HCT116 (cell line): ENCODE measurements at regions of chr2 and their contacts with region 1.

Region 1: DNA sequence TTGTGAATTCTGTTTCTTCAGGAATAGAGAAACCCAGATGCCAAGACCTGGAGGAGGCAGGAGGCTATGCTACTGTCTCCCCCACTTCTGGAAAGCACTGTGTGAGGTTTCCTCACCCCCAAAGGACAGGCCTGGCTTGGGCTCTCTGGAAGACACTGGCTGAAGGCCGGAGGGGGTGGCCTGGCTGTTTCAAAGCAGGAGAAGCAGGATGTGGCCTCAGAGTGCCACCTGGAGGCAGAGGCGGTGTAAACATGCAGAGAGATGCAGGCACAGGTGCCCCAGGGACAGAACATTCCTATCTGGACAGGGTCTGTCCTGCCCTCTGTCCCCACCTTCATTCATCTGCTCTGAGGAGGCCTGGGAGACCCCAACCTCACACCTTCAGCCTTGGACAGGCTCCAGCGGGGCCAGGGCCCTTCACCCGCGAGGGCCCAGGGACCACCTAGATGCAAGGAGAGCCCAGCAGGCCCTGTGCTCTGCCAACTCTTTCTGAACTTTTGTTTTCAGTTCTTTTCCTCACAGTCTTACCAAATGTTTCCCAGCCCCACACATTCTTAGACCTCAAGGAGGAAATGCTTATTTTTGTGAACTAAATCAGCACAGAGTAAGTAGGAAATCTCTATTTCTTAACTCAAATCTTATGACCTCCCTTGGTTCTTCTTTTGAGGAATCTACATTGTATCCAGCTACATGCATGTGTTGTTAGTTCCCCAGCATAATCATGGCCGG is 79.2 kb downstream of the LONRF2 start:
- DNase-seq: peak; percentile 35
- ATAC-seq: peak; percentile 94
- H3K4me3 ChIP-seq: no peak overlapping the region
- H3K27ac ChIP-seq: no peak overlapping the region
- H3K4me1 ChIP-seq: no peaks in the 10 kb centered on the region
- H3K27me3 ChIP-seq: peaks cover 4% of the 10 kb centered on the region; the same call in 1 of the 2 replicates
- CTCF ChIP-seq: peak; percentile 74 to 78 (median 77)
- POLR2A ChIP-seq: no peak
- RAD21 ChIP-seq: peak; percentile 89

Region 2: GRCh38 chr2:99725820-99726219 is 517.2 kb before region 1 on chr2:
- CTCF ChIA-PET with region 1: interaction called, 3 read pairs
- POLR2A ChIA-PET with region 1: no interaction called
- RAD21 ChIA-PET with region 1: no interaction called
- intact Hi-C with region 1: loop called (anchors 2 kb)
- DNase-seq: no peak
- ATAC-seq: no peak
- H3K4me3 ChIP-seq: no peak overlapping the region
- H3K27ac ChIP-seq: no peak overlapping the region
- H3K4me1 ChIP-seq: no peaks in the 10 kb centered on the region
- H3K27me3 ChIP-seq: peaks cover 12% of the 10 kb centered on the region; the same call in 1 of the 2 replicates
- CTCF ChIP-seq: no peak; a peak in 1 of 6 replicates
- POLR2A ChIP-seq: no peak
- RAD21 ChIP-seq: peak; percentile 33

Region 3: DNA sequence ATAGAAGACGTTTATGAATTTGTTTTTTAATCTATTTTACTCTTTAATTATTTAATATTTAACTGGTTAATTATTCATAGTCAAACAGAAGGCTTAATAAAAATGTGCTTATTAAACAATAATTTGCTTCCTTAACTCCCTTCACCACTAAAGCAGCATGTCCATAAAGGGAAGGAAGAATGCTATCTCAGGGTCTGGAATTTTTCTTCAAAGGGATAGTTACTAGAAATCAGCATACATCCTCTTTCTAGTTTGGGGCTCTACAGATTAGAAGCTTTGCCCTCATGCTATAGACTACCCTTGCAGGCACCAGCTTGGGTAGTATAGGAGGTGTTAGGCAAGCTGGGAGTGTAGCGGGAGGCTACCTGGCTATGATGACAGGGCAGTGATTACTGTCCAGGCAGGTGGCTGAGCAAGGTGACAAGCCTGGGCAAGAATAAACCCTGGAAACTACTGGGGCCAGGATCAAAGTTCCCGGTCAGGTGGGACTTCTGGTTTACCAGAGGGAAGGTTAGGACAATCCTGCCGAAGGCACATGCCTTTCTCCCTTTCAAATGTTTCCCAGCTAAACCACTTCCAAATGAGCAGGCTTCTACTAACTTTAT is 477.2 kb before region 1 on chr2:
- CTCF ChIA-PET with region 1: no interaction called
- POLR2A ChIA-PET with region 1: no interaction called
- RAD21 ChIA-PET with region 1: no interaction called
- intact Hi-C with region 1: no loop called
- DNase-seq: no peak
- ATAC-seq: no peak
- H3K4me3 ChIP-seq: no peak overlapping the region
- H3K27ac ChIP-seq: no peak overlapping the region
- H3K4me1 ChIP-seq: no peaks in the 10 kb centered on the region
- H3K27me3 ChIP-seq: peaks cover 52% of the 10 kb centered on the region
- CTCF ChIP-seq: no peak
- POLR2A ChIP-seq: no peak
- RAD21 ChIP-seq: no peak

Region 4: GRCh38 chr2:99818842-99819241 is 424.2 kb before region 1 on chr2:
- CTCF ChIA-PET with region 1: interaction called, 7 read pairs
- POLR2A ChIA-PET with region 1: no interaction called
- RAD21 ChIA-PET with region 1: no interaction called
- intact Hi-C with region 1: loop called (anchors 1 kb)
- DNase-seq: peak; percentile 12
- ATAC-seq: no peak
- H3K4me3 ChIP-seq: no peak overlapping the region
- H3K27ac ChIP-seq: no peak overlapping the region
- H3K4me1 ChIP-seq: no peaks in the 10 kb centered on the region
- H3K27me3 ChIP-seq: peaks cover 49% of the 10 kb centered on the region
- CTCF ChIP-seq: peak; percentile 19 to 37 (median 37); a peak in 3 of 6 replicates
- POLR2A ChIP-seq: no peak
- RAD21 ChIP-seq: peak; percentile 51

Region 5: GRCh38 chr2:100178051-100178788 is 64.8 kb before region 1 on chr2:
- CTCF ChIA-PET with region 1: no interaction called
- POLR2A ChIA-PET with region 1: no interaction called
- RAD21 ChIA-PET with region 1: no interaction called
- intact Hi-C with region 1: loop called (anchors 5 kb)
- DNase-seq: peak; percentile 88
- ATAC-seq: peak; percentile 97
- H3K4me3 ChIP-seq: no peak overlapping the region
- H3K27ac ChIP-seq: no peak overlapping the region
- H3K4me1 ChIP-seq: no peaks in the 10 kb centered on the region
- H3K27me3 ChIP-seq: no peaks in the 10 kb centered on the region
- CTCF ChIP-seq: peak; percentile 25 to 73 (median 69); a peak in 4 of 6 replicates
- POLR2A ChIP-seq: peak; percentile 35
- RAD21 ChIP-seq: peak; percentile 24; the same call in 1 of the 2 replicates

Region 6: DNA sequence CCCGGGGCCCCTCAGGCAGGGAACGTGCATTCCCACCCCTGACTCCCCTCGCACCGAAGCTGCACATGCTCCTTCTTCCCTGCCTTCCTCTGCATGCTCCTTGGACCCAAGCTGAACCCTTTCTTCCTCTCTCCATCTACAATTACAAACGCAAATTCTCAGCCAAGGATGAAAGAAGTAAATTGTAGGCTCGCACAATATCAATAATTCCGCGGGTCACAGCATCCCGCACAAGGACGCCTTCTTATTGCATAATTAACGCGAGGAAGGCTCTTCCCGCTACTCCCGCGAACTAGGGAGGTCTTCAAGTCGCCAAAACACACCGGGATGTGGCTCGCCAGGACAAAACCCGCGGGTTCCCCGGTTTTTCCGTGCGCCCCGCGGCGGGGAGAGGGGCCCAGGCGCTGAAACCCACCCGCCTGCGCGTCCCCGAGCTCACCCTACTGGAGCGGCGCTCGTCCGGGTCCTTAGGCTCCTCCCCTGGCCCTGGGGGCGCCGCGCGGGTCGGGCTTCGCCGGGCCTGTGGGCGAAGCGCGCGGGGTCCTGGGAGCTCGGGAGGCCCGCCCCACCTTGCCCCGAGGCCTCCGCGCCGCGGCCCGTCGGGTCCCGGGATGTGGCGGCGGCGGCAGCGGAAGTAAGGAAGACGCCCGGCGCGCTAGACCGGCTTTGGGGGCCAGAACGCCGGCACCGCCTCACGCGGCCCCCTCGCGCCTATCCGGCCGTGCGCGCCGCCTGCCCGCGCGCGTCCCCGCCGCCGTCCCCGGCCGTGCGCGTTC is 174.1 kb after region 1 on chr2 and contains the start of gene CHST10:
- CTCF ChIA-PET with region 1: no interaction called
- POLR2A ChIA-PET with region 1: no interaction called
- RAD21 ChIA-PET with region 1: no interaction called
- intact Hi-C with region 1: no loop called
- DNase-seq: no peak
- ATAC-seq: no peak
- H3K4me3 ChIP-seq: no peak within 1 kb of the TSS
- H3K27ac ChIP-seq: no peak within 1 kb of the TSS
- H3K4me1 ChIP-seq: no peaks in the 10 kb centered on the region
- H3K27me3 ChIP-seq: no peaks in the 10 kb centered on the region
- CTCF ChIP-seq: no peak
- POLR2A ChIP-seq: no peak
- RAD21 ChIP-seq: no peak
- total RNA-seq, gene CHST10: 0.27 TPM